ENCODE measurements at regions of chr17 and their contacts with region 1.

Region 1: GRCh38 chr17:42659079-42659931 is at the start of gene TUBG2:
- DNase-seq: peak; percentile 89
- H3K4me3 ChIP-seq: peak within 1 kb of the TSS; percentile 56 to 92 (median 67)
- H3K27ac ChIP-seq: peak within 1 kb of the TSS; percentile 53
- H3K4me1 ChIP-seq: peaks cover 16% of the 10 kb centered on the region
- H3K27me3 ChIP-seq: no peaks in the 10 kb centered on the region
- CTCF ChIP-seq: no peak
- total RNA-seq, gene TUBG2: 12.3 to 34.8 TPM

Region 2: DNA sequence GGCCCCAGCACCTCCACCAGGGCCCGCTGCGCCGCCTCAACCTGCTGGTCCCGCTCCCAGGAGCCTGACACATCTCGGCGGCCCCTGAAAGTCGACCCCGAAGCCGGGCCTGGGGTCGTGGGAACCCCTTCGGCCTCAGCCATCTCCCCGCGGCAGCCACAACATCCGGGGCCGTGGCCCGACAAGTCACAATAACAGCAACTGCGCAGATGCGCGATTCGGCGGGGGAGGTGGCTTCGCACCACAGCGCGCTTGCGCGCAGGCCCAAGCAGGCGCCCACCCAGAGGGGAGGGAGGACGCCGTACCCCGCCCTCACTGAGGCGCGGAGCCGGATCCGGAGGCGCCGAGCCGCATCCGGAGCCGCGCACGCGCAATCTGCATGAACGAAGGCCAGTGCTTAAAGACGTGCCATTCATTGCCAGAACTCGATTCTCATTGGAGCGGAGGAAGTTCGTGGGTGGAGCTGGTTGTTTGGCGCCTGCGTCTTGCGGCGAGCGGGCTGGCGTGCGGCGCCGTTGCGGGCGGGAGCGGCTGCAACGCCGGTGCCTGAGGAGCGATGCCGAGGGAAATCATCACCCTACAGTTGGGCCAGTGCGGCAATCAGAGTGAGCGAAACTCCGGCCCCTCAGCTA is 50.0 kb before region 1 on chr17 and contains the starts of genes RETREG3 and TUBG1:
- CTCF ChIA-PET with region 1: no interaction called
- dilution Hi-C with region 1: loop called (anchors 5 kb)
- in situ Hi-C with region 1: loop called in 1 of 2 experiments (anchors 5 kb)
- intact Hi-C with region 1: no loop called
- DNase-seq: peak; percentile 100
- H3K4me3 ChIP-seq: peak within 1 kb of the TSS; percentile 68 to 91 (median 79)
- H3K27ac ChIP-seq: peak within 1 kb of the TSS; percentile 59
- H3K4me1 ChIP-seq: peaks cover 10% of the 10 kb centered on the region
- H3K27me3 ChIP-seq: no peaks in the 10 kb centered on the region
- CTCF ChIP-seq: peak; percentile 17 to 56
- total RNA-seq, gene RETREG3: 60.4 to 97.7 TPM
- total RNA-seq, gene TUBG1: 43.0 to 133 TPM

Region 3: DNA sequence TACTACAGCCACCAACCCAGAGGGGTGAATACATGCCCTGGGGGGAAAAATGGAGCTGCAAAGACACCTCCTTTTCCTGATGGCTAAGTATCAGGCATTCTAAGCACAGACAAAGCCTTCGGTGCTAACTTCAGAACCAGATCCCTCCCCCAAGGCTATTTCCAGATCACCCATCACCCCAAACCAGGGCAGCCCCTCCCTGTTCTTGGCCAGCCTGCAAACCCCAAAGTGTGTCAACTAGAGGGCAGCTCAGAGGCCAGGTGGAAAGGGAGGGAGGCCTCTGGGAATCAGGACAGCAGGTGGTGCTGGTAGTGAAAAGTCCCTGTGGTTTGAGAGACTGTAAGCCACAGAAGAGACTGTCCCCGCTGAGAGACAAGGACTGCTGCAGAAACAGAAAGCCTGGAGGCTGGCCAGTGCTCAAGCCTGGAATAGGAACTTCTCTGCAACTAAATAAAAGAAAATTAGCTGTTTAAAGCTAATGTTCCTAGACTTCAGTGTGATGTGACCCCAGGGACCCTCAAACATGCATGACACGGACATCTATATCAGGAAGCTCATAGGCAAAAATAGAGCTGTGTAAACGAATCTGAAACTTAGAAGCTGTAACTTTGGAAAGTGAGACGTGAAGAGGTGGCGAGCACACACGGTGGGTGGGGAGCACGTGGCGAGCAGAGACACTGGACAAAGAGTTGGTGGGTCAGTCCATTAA is 40.7 kb before region 1 on chr17:
- CTCF ChIA-PET with region 1: no interaction called
- dilution Hi-C with region 1: no loop called
- in situ Hi-C with region 1: no loop called
- intact Hi-C with region 1: loop called (anchors 5 kb)
- DNase-seq: peak; percentile 73
- H3K4me3 ChIP-seq: no peak overlapping the region
- H3K27ac ChIP-seq: no peak overlapping the region
- H3K4me1 ChIP-seq: peaks cover 15% of the 10 kb centered on the region
- H3K27me3 ChIP-seq: no peaks in the 10 kb centered on the region
- CTCF ChIP-seq: peak in 1 of 2 donors; percentile 65

Region 4: GRCh38 chr17:42642336-42642735 is 17.0 kb before region 1 on chr17:
- CTCF ChIA-PET with region 1: no interaction called
- dilution Hi-C with region 1: no loop called
- in situ Hi-C with region 1: no loop called
- intact Hi-C with region 1: no loop called
- DNase-seq: no peak
- H3K4me3 ChIP-seq: no peak overlapping the region
- H3K27ac ChIP-seq: no peak overlapping the region
- H3K4me1 ChIP-seq: no peaks in the 10 kb centered on the region
- H3K27me3 ChIP-seq: no peaks in the 10 kb centered on the region
- CTCF ChIP-seq: no peak

Region 5: DNA sequence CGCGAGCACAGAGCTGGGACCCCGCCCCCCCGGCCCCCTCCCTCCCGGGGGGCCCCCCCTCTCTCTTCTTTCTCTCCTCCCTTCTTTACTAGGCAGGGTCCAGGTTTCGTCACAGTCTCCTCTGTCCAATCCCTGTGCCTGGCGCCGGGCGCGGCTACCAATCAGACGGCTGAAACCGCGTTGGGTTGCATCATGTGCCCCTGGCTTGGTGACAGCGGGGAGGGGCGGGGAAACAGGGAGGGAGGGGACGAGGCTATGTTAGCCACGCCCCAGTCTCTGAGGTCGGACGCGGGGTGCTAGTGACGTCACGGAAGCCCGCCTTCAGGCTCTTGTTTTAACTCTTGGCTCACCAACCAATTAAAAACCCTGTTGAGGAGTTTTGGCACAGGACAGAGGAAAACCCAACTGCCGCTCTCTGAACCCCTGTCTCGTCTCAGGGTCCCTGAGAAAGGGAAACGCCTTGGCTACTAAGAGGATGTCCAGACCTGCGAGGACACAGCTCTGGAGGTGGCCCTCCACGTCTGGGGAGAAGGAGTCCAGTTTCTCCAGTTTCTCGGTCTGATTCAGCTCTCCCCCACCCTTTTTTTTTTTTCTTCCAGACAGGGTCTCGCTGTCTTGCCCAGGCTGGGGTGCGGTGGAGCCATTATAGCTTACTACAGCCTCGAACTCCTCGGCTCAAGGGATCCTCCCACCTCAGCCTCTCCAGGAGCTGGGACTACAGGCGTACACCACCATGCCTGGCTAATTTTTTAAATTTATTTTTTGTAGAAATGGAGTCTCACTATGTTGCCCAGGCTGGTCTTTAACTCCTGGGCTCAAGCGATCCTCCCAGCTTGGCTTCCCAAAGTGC is 17.9 kb after region 1 on chr17:
- CTCF ChIA-PET with region 1: no interaction called
- dilution Hi-C with region 1: no loop called
- in situ Hi-C with region 1: no loop called
- intact Hi-C with region 1: no loop called
- DNase-seq: peak; percentile 99
- H3K4me3 ChIP-seq: peak overlapping the region; percentile 79 to 89 (median 89)
- H3K27ac ChIP-seq: peak overlapping the region; percentile 73
- H3K4me1 ChIP-seq: peaks cover 62% of the 10 kb centered on the region
- H3K27me3 ChIP-seq: no peaks in the 10 kb centered on the region
- CTCF ChIP-seq: no peak

Region 6: DNA sequence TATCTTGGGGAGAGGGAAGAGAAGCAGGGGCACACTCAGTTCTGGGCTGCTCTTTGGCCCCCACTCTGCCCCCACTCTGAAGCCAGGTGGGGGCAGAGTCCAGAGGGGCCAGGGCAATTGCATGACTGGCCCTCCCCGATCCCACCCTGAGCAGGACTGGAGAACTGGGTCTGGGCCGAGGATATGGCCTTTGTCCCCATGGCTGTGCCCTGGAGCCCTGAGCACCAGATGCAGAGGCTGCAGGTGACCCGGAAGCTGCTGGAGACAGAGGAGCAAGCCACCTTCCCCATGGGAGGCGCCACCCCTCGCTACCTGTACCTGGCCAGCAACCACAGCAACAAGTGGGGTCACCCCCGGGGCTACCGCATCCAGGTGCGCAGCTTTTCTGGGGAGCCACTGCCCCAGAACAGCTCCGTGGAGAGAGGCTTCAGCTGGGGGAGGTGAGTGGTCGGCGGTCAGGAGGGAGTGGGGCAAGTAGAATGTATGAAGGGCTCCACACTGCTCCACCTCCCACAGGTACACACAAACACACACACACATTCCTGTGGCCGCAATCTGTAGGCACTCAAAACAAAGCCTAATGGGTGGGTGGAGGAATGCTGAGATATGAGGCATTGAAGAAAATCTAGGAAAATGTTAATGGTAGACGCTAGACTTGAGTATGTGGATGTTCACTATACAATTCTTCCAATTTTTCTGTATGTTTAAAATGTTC is 213.1 kb after region 1 on chr17:
- CTCF ChIA-PET with region 1: no interaction called
- dilution Hi-C with region 1: no loop called
- in situ Hi-C with region 1: no loop called
- intact Hi-C with region 1: no loop called
- DNase-seq: no peak
- H3K4me3 ChIP-seq: no peak overlapping the region
- H3K27ac ChIP-seq: no peak overlapping the region
- H3K4me1 ChIP-seq: no peaks in the 10 kb centered on the region
- H3K27me3 ChIP-seq: peaks cover 2% of the 10 kb centered on the region
- CTCF ChIP-seq: no peak

Region 7: DNA sequence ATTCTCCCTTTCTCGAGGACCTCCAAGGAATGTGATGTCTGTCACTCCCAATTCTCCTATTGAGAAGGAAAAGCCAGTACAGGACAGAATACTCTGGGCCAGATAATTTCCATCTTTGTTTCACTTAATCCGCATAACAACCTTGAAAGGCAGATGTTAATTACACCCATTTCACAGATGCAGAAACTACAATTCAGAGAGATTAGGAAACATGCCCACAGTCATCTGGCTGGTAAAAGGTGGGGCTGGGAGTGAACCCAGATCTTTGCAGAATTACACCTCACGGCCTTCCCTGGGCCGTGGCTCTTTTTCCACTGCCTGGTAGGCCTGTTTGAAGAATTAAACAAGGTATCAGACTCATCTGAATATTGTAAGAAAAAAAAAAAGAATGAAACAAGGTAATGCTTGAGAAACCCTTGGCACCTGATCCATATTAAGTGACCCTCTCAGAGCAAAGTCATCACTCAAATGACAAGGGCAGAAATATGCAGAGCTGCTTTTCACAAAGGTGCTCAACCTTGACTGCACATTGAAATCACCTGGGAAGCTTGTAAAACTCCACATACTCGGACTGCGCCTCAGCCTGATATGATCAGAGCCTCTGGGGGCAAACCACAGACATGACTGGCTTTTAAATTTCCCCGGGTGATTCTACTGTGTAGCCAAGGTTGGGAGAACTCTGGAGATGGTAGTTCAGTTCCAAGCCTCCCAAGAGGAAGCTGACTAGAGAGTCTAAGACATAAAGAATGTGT is 224.7 kb after region 1 on chr17:
- CTCF ChIA-PET with region 1: no interaction called
- dilution Hi-C with region 1: no loop called
- in situ Hi-C with region 1: no loop called
- intact Hi-C with region 1: no loop called
- DNase-seq: peak; percentile 35
- H3K4me3 ChIP-seq: no peak overlapping the region
- H3K27ac ChIP-seq: no peak overlapping the region
- H3K4me1 ChIP-seq: no peaks in the 10 kb centered on the region
- H3K27me3 ChIP-seq: no peaks in the 10 kb centered on the region
- CTCF ChIP-seq: no peak

Measured in mammary epithelial cell (primary cell).